Gastrocnemius medialis (tissue), 4 donors: ENCODE measurements at regions of chr7 and their contacts with region 1.

Region 1: GRCh38 chr7:133252858-133253518 is at the start of gene EXOC4:
- DNase-seq: peak; percentile 93 to 95
- ATAC-seq: peak; percentile 100
- H3K4me3 ChIP-seq: peak within 1 kb of the TSS; percentile 84 to 99 (median 90)
- H3K27ac ChIP-seq: peak within 1 kb of the TSS; percentile 92 to 98 (median 93)
- H3K4me1 ChIP-seq: peaks cover 18 to 28% of the 10 kb centered on the region in 2 donors
- H3K27me3 ChIP-seq: no peaks in the 10 kb centered on the region
- CTCF ChIP-seq: no peak
- POLR2A ChIP-seq: peak; percentile 65
- total RNA-seq, gene EXOC4: 36.9 to 78.0 (median 52.2) TPM

Region 2: DNA sequence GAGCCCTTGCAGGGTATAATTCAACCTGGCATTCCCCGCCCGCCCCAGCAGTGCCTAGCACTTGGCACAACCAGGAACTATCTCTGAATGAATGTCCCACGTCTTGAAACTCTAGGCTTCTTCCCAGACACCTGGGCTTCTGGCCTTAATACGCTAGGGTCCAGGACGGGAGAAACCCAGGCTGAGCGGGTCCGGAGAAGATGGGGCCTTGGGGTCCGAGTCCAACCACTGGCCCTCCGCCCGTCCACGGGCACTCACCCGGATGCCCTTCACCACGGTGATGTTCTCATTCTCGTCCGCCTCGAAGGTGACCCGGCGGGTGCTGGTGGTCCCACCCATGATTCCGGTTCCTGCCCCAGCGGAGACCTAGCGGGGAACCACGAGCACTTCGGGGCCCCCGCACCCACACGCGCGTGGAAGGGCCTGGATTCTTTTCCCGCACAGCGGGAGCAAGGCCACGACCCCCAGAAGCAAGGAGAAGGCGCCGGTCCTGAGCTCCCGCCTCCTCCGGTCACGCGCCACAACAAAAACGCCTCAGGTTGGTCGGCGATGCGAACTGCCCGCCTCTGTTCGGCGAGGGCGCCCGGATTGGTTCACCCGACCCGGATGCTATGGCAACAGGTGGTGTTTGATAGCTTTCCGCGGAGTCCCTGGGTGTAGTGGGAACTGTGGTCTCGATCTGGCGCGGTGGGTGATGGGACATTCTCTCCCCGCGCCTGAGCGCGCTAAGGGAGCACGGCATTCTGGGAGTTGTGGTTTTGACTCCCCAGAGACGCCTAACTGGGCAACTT is 171.2 kb before region 1 on chr7 and contains the start of gene CHCHD3:
- in situ Hi-C with region 1: loop called in 1 of 4 experiments (anchors 10 kb)
- intact Hi-C with region 1: loop called (anchors 1 kb)
- DNase-seq: peak; percentile 98
- ATAC-seq: peak; percentile 98 to 99
- H3K4me3 ChIP-seq: peak within 1 kb of the TSS; percentile 70 to 99 (median 92)
- H3K27ac ChIP-seq: peak within 1 kb of the TSS; percentile 91 to 93 (median 92)
- H3K4me1 ChIP-seq: peaks cover 33 to 44% of the 10 kb centered on the region in 2 donors
- H3K27me3 ChIP-seq: no peaks in the 10 kb centered on the region
- CTCF ChIP-seq: peak in 1 of 5 experiments; percentile 7
- POLR2A ChIP-seq: peak; percentile 81 to 84
- total RNA-seq, gene CHCHD3: 110 to 177 (median 131) TPM